ENCODE measurements at regions of chr1 and their contacts with region 1.

Region 1: GRCh38 chr1:16946646-16947045 is 24.9 kb downstream of the CROCC start:
- DNase-seq: no peak
- ATAC-seq: no peak
- H3K4me3 Mint-ChIP-seq: no peak overlapping the region
- H3K27ac Mint-ChIP-seq: no peak overlapping the region
- H3K4me1 Mint-ChIP-seq: peaks cover 2% of the 10 kb centered on the region
- H3K27me3 Mint-ChIP-seq: no peaks in the 10 kb centered on the region
- CTCF ChIP-seq: no peak

Region 2: GRCh38 chr1:16236511-16237342 is 709.9 kb before region 1 on chr1 and contains the start of gene CPLANE2:
- CTCF ChIA-PET with region 1: no interaction called
- POLR2A ChIA-PET with region 1: no interaction called
- intact Hi-C with region 1: loop called (anchors 2 kb)
- DNase-seq: peak; percentile 97
- ATAC-seq: peak; percentile 82
- H3K4me3 Mint-ChIP-seq: peak within 1 kb of the TSS; percentile 90
- H3K27ac Mint-ChIP-seq: peak within 1 kb of the TSS; percentile 95
- H3K4me1 Mint-ChIP-seq: peaks cover 12% of the 10 kb centered on the region
- H3K27me3 Mint-ChIP-seq: no peaks in the 10 kb centered on the region
- CTCF ChIP-seq: no peak
- total RNA-seq, gene CPLANE2: 5.0 and 5.1 TPM in 2 replicates

Region 3: DNA sequence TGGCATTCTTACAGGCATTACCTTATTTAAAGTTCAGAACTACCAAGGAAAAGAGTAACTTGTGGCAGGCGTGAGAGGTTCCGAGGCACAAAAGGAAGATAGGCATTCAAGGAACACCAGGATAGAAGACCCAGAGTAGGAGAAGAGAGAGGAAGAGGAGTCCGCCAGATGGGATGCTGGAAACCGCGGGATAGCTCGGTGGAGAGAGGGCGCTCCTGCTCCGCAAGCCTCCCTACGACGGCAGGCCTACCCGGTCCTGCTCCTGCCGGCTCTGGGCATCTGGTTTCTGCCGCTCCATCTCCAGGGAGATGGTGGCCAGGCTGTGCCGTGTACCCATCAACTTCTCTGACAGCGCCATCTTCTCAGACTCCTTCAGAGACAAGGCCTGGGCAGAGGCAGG is 327.9 kb before region 1 on chr1:
- CTCF ChIA-PET with region 1: interaction called, 49 read pairs
- POLR2A ChIA-PET with region 1: interaction called, 13 read pairs
- intact Hi-C with region 1: loop called (anchors 1 kb)
- DNase-seq: peak; percentile 26
- ATAC-seq: no peak
- H3K4me3 Mint-ChIP-seq: no peak overlapping the region
- H3K27ac Mint-ChIP-seq: no peak overlapping the region
- H3K4me1 Mint-ChIP-seq: no peaks in the 10 kb centered on the region
- H3K27me3 Mint-ChIP-seq: no peaks in the 10 kb centered on the region
- CTCF ChIP-seq: no peak

Region 4: DNA sequence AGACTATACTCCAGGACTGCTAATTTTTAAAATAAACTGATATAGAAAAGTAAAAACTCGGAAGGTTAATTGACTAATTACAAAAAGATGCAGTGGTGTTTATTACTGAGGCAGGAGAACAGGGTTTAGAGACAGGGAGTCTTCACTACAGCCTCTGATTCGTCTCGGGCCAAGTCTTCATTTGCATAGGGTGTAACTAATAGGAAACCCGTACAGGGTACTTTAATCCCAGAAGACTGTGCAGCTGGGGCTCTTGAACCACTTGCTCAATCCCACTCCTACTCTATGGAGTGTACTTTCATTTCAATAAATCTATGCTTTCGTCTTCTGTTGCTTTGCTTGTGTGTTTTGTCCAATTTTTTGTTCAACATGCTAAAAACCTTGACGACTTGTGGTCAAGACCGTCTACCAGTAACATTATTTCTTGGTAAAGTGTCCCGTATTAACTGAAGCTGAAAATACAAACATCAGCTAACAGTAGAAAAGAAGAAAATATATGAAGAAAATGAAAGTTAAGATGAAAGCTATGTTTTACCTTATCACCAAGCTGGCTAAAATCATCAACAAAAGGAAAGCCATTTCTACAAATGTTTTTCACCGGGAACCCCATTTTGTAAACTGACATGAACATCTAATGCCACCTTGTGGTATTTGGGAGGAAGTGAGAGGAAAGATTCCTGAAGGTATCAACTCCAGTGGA is 99.1 kb after region 1 on chr1:
- CTCF ChIA-PET with region 1: interaction called, 13 read pairs
- POLR2A ChIA-PET with region 1: no interaction called
- intact Hi-C with region 1: loop called (anchors 1 kb)
- DNase-seq: no peak
- ATAC-seq: peak; percentile 71
- H3K4me3 Mint-ChIP-seq: peak overlapping the region; percentile 78
- H3K27ac Mint-ChIP-seq: peak overlapping the region; percentile 77
- H3K4me1 Mint-ChIP-seq: peaks cover 18% of the 10 kb centered on the region
- H3K27me3 Mint-ChIP-seq: no peaks in the 10 kb centered on the region
- CTCF ChIP-seq: no peak

Measured in activated B cell treated with CpG ODN at 0.5 μM for 24 hours (primary cell).